Panc1 (cell line): ENCODE measurements at regions of chr19 and their contacts with region 1.

Region 1: GRCh38 chr19:44845612-44846454 is at the start of gene NECTIN2:
- DNase-seq: peak; percentile 81
- ATAC-seq: peak; percentile 75
- H3K4me3 ChIP-seq: peak within 1 kb of the TSS; percentile 92 to 93
- H3K27ac ChIP-seq: peak within 1 kb of the TSS; percentile 94
- H3K4me1 ChIP-seq: peaks cover 24% of the 10 kb centered on the region
- H3K27me3 ChIP-seq: no peaks in the 10 kb centered on the region
- CTCF ChIP-seq: no peak
- total RNA-seq, gene NECTIN2: 104 TPM

Region 2: DNA sequence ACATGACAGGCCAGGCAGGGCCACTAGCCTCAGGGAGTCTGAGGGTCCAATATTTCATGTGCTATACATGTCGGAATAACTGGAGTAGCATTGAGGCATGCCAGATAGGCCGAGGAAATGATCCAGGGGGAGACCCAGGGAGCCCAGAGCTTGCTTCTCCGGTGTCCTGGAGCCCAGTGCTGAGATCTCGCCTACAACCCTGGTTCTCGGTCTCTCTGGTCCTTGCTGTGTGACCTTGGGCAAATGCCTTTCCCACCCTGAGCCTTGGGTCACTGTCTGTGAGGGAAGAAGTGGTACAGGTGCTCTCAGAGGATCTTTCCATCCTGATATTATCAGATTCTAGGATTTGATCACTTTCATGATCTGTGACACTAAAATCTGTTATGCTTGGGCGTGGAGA is 56.9 kb before region 1 on chr19:
- CTCF ChIA-PET with region 1: no interaction called
- POLR2A ChIA-PET with region 1: interaction called, 10 read pairs
- in situ Hi-C with region 1: no loop called
- intact Hi-C with region 1: no loop called
- DNase-seq: no peak
- ATAC-seq: no peak
- H3K4me3 ChIP-seq: no peak overlapping the region
- H3K27ac ChIP-seq: no peak overlapping the region
- H3K4me1 ChIP-seq: no peaks in the 10 kb centered on the region
- H3K27me3 ChIP-seq: no peaks in the 10 kb centered on the region
- CTCF ChIP-seq: no peak

Region 3: GRCh38 chr19:44796701-44797115 is 49.1 kb before region 1 on chr19:
- CTCF ChIA-PET with region 1: no interaction called
- POLR2A ChIA-PET with region 1: interaction called, 4 read pairs
- in situ Hi-C with region 1: no loop called
- intact Hi-C with region 1: loop called (anchors 5 kb)
- DNase-seq: no peak
- ATAC-seq: peak; percentile 74
- H3K4me3 ChIP-seq: no peak overlapping the region
- H3K27ac ChIP-seq: peak overlapping the region; percentile 29; the same call in 1 of the 2 replicates
- H3K4me1 ChIP-seq: peaks cover 13% of the 10 kb centered on the region
- H3K27me3 ChIP-seq: no peaks in the 10 kb centered on the region
- CTCF ChIP-seq: no peak

Region 4: DNA sequence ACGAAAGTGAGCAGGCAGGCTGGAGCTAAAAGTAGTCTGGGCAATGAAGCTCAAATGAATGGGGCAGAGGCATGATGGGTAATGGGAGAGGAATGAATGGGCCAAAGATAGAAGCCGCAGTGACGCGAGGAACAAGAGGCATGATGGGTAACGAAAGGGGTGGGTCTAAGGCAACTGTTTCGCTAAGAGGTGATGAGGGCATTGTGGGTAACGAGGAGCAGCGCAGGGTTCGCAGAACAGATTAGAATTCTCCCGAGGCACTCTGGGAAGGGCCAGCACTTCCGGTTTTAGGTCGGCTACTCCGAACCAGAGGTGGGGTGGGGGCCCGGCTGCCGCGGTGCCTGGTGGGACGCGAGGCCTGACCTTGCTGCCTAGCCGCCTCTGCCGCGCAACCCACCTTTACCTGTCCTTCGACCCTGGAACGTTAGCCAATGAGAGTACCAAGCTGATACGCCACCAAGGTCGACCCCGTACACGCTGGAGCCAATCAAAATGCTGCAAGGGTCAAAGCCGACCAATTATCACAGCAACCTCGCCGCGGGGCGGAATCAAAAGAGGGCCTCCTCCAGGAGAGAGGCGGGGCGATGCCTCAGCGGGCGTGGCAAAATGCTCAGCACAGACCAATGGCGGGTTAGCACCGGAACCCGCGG is 44.7 kb after region 1 on chr19:
- CTCF ChIA-PET with region 1: no interaction called
- POLR2A ChIA-PET with region 1: interaction called, 22 read pairs
- in situ Hi-C with region 1: no loop called
- intact Hi-C with region 1: no loop called
- DNase-seq: peak; percentile 97
- ATAC-seq: peak; percentile 92
- H3K4me3 ChIP-seq: peak overlapping the region; percentile 42 to 65
- H3K27ac ChIP-seq: peak overlapping the region; percentile 93
- H3K4me1 ChIP-seq: peaks cover 7% of the 10 kb centered on the region; the same call in 1 of the 2 replicates
- H3K27me3 ChIP-seq: no peaks in the 10 kb centered on the region
- CTCF ChIP-seq: no peak